ENCODE measurements at regions of chrX and their contacts with region 1.

Region 1: GRCh38 chrX:24515447-24515846 is 50.4 kb downstream of the PDK3 start:
- DNase-seq: peak; percentile 33
- H3K4me3 ChIP-seq: no peak overlapping the region
- H3K27ac ChIP-seq: no peak overlapping the region
- H3K4me1 ChIP-seq: no peaks in the 10 kb centered on the region
- H3K27me3 ChIP-seq: no peaks in the 10 kb centered on the region
- CTCF ChIP-seq: peak in 1 of 2 donors; percentile 35
- POLR2A ChIP-seq: no peak

Region 2: GRCh38 chrX:24561121-24561520 is 45.7 kb after region 1 on chrX:
- CTCF ChIA-PET with region 1: interaction called, 3 read pairs
- POLR2A ChIA-PET with region 1: interaction called, 6 read pairs
- dilution Hi-C with region 1: no loop called
- intact Hi-C with region 1: loop called (anchors 1 kb)
- DNase-seq: peak; percentile 44
- H3K4me3 ChIP-seq: no peak overlapping the region
- H3K27ac ChIP-seq: no peak overlapping the region
- H3K4me1 ChIP-seq: no peaks in the 10 kb centered on the region
- H3K27me3 ChIP-seq: no peaks in the 10 kb centered on the region
- CTCF ChIP-seq: peak in 1 of 2 donors; percentile 24
- POLR2A ChIP-seq: no peak

Region 3: DNA sequence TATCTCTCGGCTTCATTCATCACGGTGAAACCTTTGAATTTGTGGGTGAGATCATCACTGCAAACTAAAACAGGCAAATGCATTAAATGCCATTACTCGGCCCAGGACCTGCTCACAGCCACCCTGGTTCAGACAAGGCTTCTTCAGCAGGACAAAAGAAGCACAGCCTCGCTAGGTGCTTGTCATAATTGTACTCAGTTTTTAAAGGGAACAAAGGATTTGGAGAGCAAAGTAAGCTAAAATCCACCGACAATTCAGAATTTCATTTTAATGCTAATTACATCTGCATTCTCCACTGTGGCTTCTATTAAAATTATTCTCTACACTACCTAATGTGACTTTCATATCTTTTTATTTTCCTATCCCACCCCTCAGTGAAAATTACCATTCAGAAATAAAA is 74.7 kb after region 1 on chrX:
- CTCF ChIA-PET with region 1: no interaction called
- POLR2A ChIA-PET with region 1: no interaction called
- dilution Hi-C with region 1: no loop called
- intact Hi-C with region 1: no loop called
- DNase-seq: no peak
- H3K4me3 ChIP-seq: no peak overlapping the region
- H3K27ac ChIP-seq: no peak overlapping the region
- H3K4me1 ChIP-seq: no peaks in the 10 kb centered on the region
- H3K27me3 ChIP-seq: no peaks in the 10 kb centered on the region
- CTCF ChIP-seq: no peak
- POLR2A ChIP-seq: no peak

Measured in endothelial cell of umbilical vein (primary cell).